ENCODE measurements at regions of chrX and their contacts with region 1.

Region 1: DNA sequence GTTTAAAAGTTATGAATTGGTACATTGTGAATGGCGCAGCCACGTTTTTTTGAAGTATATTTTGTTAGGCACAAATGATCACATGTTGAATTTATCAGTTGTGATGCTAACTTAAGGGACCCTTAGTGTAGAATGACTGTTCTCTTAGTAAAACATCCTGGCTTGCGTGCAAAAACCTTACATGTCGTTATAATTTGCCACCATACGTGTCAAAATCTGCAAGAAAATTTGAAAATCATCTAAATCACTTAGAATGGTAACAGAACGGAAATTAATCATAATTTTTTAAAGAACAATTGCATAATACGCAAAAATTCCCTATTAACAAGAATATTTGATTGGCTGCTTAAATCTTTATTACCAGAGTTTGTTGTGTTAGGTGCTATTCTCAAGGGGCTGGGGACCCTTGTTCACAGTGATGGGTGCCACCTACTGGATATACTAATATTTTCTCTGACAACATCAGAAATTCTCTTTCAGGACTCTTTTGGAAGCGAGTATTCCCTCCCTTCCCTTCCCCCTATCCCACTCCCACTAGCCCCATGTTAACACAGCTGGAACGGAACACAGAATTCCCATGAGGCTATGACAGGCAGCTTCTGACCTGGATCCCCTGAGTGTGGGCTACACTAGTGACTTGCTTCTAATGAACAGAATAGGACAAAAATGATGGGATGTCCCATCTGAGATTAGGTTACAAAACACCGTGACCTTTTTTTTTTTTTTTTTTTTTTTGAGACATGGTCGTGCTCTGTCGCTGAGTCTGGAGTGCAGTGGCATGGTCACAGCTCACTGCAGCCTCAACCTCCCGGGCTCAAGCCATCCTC is 71.8 kb downstream of the SUPT20HL2 start:
- DNase-seq: peak in 3 of 5 donors; percentile 19 to 38 (median 33)
- ATAC-seq: peak; percentile 38 to 63 (median 58)
- H3K4me3 ChIP-seq: no peak overlapping the region
- H3K27ac ChIP-seq: peak overlapping the region in 3 of 12 donors; percentile 17 to 50 (median 24)
- H3K4me1 ChIP-seq: no peaks in the 10 kb centered on the region
- H3K27me3 ChIP-seq: peaks cover 0 to 6% (median 0%) of the 10 kb centered on the region in 9 donors
- CTCF ChIP-seq: peak; percentile 24 to 57 (median 36)
- POLR2A ChIP-seq: no peak

Region 2: GRCh38 chrX:23694606-23695005 is 547.4 kb before region 1 on chrX:
- intact Hi-C with region 1: loop called in 1 of 10 experiments (anchors 5 kb)
- DNase-seq: peak in 3 of 5 donors; percentile 44 to 73 (median 50)
- ATAC-seq: peak in 3 of 4 donors; percentile 56 to 75 (median 73)
- H3K4me3 ChIP-seq: no peak overlapping the region
- H3K27ac ChIP-seq: no peak overlapping the region
- H3K4me1 ChIP-seq: no peaks in the 10 kb centered on the region
- H3K27me3 ChIP-seq: peaks cover 0 to 2% (median 0%) of the 10 kb centered on the region in 9 donors
- CTCF ChIP-seq: peak; percentile 21 to 57 (median 42)
- POLR2A ChIP-seq: no peak

Region 3: GRCh38 chrX:24081661-24082264 is 160.3 kb before region 1 on chrX:
- intact Hi-C with region 1: loop called (anchors 1 to 10 kb)
- DNase-seq: peak; percentile 32 to 69 (median 49)
- ATAC-seq: peak; percentile 20 to 79 (median 64)
- H3K4me3 ChIP-seq: no peak overlapping the region
- H3K27ac ChIP-seq: no peak overlapping the region
- H3K4me1 ChIP-seq: no peaks in the 10 kb centered on the region
- H3K27me3 ChIP-seq: peaks cover 0 to 8% (median 0%) of the 10 kb centered on the region in 9 donors
- CTCF ChIP-seq: peak in 11 of 12 donors; percentile 22 to 56 (median 43)
- POLR2A ChIP-seq: no peak

Measured in heart left ventricle (tissue), 16 donors.